ENCODE measurements at regions of chr1 and their contacts with region 1.

Region 1: GRCh38 chr1:109213785-109214468 is at the start of gene SARS1:
- DNase-seq: peak; percentile 83
- H3K4me3 ChIP-seq: peak within 1 kb of the TSS; percentile 65 to 66
- H3K27ac ChIP-seq: peak within 1 kb of the TSS; percentile 87
- H3K4me1 ChIP-seq: no peaks in the 10 kb centered on the region
- H3K27me3 ChIP-seq: no peaks in the 10 kb centered on the region
- CTCF ChIP-seq: peak in 1 of 4 experiments; percentile 17
- POLR2A ChIP-seq: peak; percentile 92
- total RNA-seq, gene SARS1: 123 to 132 TPM

Region 2: GRCh38 chr1:109112652-109113285 is 101.2 kb before region 1 on chr1:
- intact Hi-C with region 1: loop called (anchors 5 kb)
- DNase-seq: peak; percentile 87
- H3K4me3 ChIP-seq: no peak overlapping the region
- H3K27ac ChIP-seq: no peak overlapping the region
- H3K4me1 ChIP-seq: no peaks in the 10 kb centered on the region
- H3K27me3 ChIP-seq: no peaks in the 10 kb centered on the region
- CTCF ChIP-seq: peak; percentile 92 to 94 (median 93)
- POLR2A ChIP-seq: no peak

Region 3: GRCh38 chr1:109426278-109427170 is 212.6 kb after region 1 on chr1 and contains the start of gene PSMA5:
- intact Hi-C with region 1: no loop called
- DNase-seq: peak; percentile 98
- H3K4me3 ChIP-seq: peak within 1 kb of the TSS; percentile 74 to 84
- H3K27ac ChIP-seq: peak within 1 kb of the TSS; percentile 72 to 73
- H3K4me1 ChIP-seq: peaks cover 8% of the 10 kb centered on the region
- H3K27me3 ChIP-seq: no peaks in the 10 kb centered on the region
- CTCF ChIP-seq: peak in 1 of 4 experiments; percentile 5
- POLR2A ChIP-seq: peak; percentile 68
- total RNA-seq, gene PSMA5: 24.6 to 31.8 TPM

Measured in prostate gland (tissue), 2 donors.